Endothelial cell of umbilical vein (primary cell): ENCODE measurements at regions of chr3 and their contacts with region 1.

Region 1: GRCh38 chr3:67384760-67385397 is 269.5 kb downstream of the SUCLG2 start:
- DNase-seq: peak; percentile 45
- H3K4me3 ChIP-seq: no peak overlapping the region
- H3K27ac ChIP-seq: no peak overlapping the region
- H3K4me1 ChIP-seq: no peaks in the 10 kb centered on the region
- H3K27me3 ChIP-seq: no peaks in the 10 kb centered on the region
- CTCF ChIP-seq: peak; percentile 71 to 75
- POLR2A ChIP-seq: no peak

Region 2: GRCh38 chr3:66889750-66890494 is 495.0 kb before region 1 on chr3:
- CTCF ChIA-PET with region 1: no interaction called
- POLR2A ChIA-PET with region 1: no interaction called
- dilution Hi-C with region 1: no loop called
- intact Hi-C with region 1: no loop called
- DNase-seq: no peak
- H3K4me3 ChIP-seq: no peak overlapping the region
- H3K27ac ChIP-seq: no peak overlapping the region
- H3K4me1 ChIP-seq: no peaks in the 10 kb centered on the region
- H3K27me3 ChIP-seq: no peaks in the 10 kb centered on the region
- CTCF ChIP-seq: no peak
- POLR2A ChIP-seq: no peak

Region 3: DNA sequence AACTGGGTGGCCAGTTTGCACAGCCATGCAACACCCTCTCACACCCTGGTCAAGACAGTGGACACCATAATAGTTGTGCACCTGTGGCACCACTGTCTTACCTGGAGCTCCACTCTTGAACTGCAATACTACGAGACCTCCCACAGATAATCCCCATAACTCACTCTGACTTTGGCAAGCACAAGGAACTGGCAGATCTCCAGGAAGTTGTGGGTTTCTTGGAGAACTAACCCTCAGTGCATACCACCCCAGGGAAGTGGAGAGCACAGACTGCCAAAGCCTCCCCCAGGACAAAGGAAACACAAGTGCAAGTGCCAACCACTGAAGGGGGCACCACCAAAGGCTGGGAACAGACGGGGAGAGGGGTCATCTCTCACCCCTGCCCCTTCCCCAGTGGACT is 49.1 kb before region 1 on chr3:
- CTCF ChIA-PET with region 1: no interaction called
- POLR2A ChIA-PET with region 1: no interaction called
- dilution Hi-C with region 1: no loop called
- intact Hi-C with region 1: no loop called
- DNase-seq: no peak
- H3K4me3 ChIP-seq: no peak overlapping the region
- H3K27ac ChIP-seq: no peak overlapping the region
- H3K4me1 ChIP-seq: no peaks in the 10 kb centered on the region
- H3K27me3 ChIP-seq: no peaks in the 10 kb centered on the region
- CTCF ChIP-seq: no peak
- POLR2A ChIP-seq: no peak

Region 4: GRCh38 chr3:67531250-67532106 is 146.6 kb after region 1 on chr3:
- CTCF ChIA-PET with region 1: interaction called, 5 read pairs
- POLR2A ChIA-PET with region 1: no interaction called
- dilution Hi-C with region 1: no loop called
- intact Hi-C with region 1: loop called (anchors 5 kb)
- DNase-seq: peak; percentile 34
- H3K4me3 ChIP-seq: no peak overlapping the region
- H3K27ac ChIP-seq: no peak overlapping the region
- H3K4me1 ChIP-seq: peaks cover 31% of the 10 kb centered on the region
- H3K27me3 ChIP-seq: no peaks in the 10 kb centered on the region
- CTCF ChIP-seq: no peak
- POLR2A ChIP-seq: no peak

Region 5: GRCh38 chr3:67654099-67654843 is 269.4 kb after region 1 on chr3 and contains the start of gene SUCLG2:
- CTCF ChIA-PET with region 1: interaction called, 5 read pairs
- POLR2A ChIA-PET with region 1: no interaction called
- dilution Hi-C with region 1: no loop called
- intact Hi-C with region 1: loop called (anchors 5 kb)
- DNase-seq: peak; percentile 83
- H3K4me3 ChIP-seq: peak within 1 kb of the TSS; percentile 49 to 90 (median 75)
- H3K27ac ChIP-seq: peak within 1 kb of the TSS; percentile 60
- H3K4me1 ChIP-seq: peaks cover 9% of the 10 kb centered on the region
- H3K27me3 ChIP-seq: no peaks in the 10 kb centered on the region
- CTCF ChIP-seq: no peak
- POLR2A ChIP-seq: peak; percentile 88
- total RNA-seq, gene SUCLG2: 35.9 and 38.3 TPM in 2 replicates

Region 6: GRCh38 chr3:67790043-67790442 is 405.2 kb after region 1 on chr3:
- CTCF ChIA-PET with region 1: interaction called, 137 read pairs
- POLR2A ChIA-PET with region 1: no interaction called
- dilution Hi-C with region 1: no loop called
- intact Hi-C with region 1: loop called (anchors 1 kb)
- DNase-seq: peak; percentile 68
- H3K4me3 ChIP-seq: no peak overlapping the region
- H3K27ac ChIP-seq: no peak overlapping the region
- H3K4me1 ChIP-seq: no peaks in the 10 kb centered on the region
- H3K27me3 ChIP-seq: peaks cover 0 to 2% of the 10 kb centered on the region in 2 experiments
- CTCF ChIP-seq: peak; percentile 62 to 67
- POLR2A ChIP-seq: no peak

Region 7: DNA sequence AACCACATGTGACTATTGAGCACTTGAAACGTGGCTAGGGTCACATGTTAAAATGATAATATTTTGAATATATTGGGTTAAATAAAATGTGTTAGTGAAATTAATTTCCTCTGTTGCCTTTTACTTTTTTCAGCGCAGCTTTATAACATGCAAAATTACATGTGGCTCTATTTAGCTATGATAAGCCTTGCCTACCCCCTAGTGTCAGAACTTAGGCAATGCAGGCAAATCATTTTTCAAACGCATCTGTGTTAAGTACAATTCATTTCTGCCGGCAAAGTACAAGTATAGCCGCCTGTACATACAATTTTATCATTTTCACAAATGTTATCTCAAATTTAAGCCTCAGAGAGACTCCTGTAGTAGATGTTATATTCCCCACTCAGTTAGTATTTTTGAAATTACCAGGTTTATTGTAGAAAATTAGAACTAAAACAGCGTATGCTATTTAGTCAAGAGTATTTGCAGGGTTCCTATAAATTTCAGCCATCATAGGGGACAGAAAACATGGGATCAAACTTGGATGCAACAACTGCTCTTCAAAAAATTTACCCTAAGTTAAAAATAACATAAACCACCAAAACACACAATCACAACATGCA is 1491.3 kb after region 1 on chr3:
- CTCF ChIA-PET with region 1: interaction called, 14 read pairs
- POLR2A ChIA-PET with region 1: no interaction called
- dilution Hi-C with region 1: no loop called
- intact Hi-C with region 1: loop called (anchors 2 kb)
- DNase-seq: peak; percentile 73
- H3K4me3 ChIP-seq: no peak overlapping the region
- H3K27ac ChIP-seq: no peak overlapping the region
- H3K4me1 ChIP-seq: no peaks in the 10 kb centered on the region
- H3K27me3 ChIP-seq: peaks cover 3 to 4% of the 10 kb centered on the region in 2 experiments
- CTCF ChIP-seq: peak; percentile 55 to 71
- POLR2A ChIP-seq: no peak